ENCODE measurements at regions of chr11 and their contacts with region 1.

Region 1: GRCh38 chr11:17978553-17979287 is 34.1 kb downstream of the SERGEF start:
- DNase-seq: peak; percentile 55 to 72
- ATAC-seq: peak; percentile 98
- H3K4me3 ChIP-seq: no peak overlapping the region
- H3K27ac ChIP-seq: no peak overlapping the region
- H3K4me1 ChIP-seq: no peaks in the 10 kb centered on the region
- CTCF ChIP-seq: peak; percentile 76
- EP300 ChIP-seq: no peak
- POLR2A ChIP-seq: no peak
- RAD21 ChIP-seq: peak; percentile 67

Region 2: GRCh38 chr11:17593466-17594245 is 385.1 kb before region 1 on chr11:
- CTCF ChIA-PET with region 1: interaction called, 45 read pairs
- POLR2A ChIA-PET with region 1: no interaction called
- DNase-seq: no peak
- ATAC-seq: peak in 1 of 2 experiments; percentile 62; a peak in 3 of 6 replicates
- H3K4me3 ChIP-seq: no peak overlapping the region
- H3K27ac ChIP-seq: no peak overlapping the region
- H3K4me1 ChIP-seq: no peaks in the 10 kb centered on the region
- CTCF ChIP-seq: no peak
- EP300 ChIP-seq: no peak
- POLR2A ChIP-seq: no peak
- RAD21 ChIP-seq: no peak

Region 3: DNA sequence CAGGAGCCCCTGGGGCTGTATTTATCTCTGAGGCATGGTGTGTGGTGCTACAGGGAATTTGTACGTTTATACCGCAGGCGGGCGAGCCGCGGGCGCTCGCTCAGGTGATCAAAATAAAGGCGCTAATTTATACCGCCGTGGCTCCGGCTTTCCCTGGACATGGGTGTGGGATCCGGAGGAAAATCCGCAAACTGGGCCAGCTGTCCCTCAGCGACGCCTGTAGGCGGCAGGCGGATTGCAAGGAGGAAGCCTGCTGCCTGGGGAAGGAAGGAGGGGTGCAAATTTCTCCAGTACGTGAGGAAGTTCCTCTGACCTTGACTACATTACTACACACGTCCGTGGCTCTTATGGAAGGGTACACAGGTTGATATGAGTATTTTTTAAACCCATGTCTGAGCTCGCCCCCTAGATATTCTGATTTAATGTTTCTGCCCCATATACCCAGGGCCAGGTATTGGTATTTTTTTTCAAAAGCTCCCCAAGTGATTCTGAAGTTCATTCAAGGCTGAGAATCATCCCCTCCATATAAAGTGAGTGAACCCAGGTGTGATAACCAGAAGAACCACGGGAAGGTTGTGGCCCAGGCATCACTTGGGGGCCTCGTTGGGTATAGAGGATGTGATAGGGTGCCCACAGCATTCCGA is 256.6 kb before region 1 on chr11:
- CTCF ChIA-PET with region 1: interaction called, 15 read pairs
- POLR2A ChIA-PET with region 1: no interaction called
- DNase-seq: peak; percentile 48 to 56
- ATAC-seq: peak; percentile 12 to 70; a peak in 4 of 6 replicates
- H3K4me3 ChIP-seq: no peak overlapping the region
- H3K27ac ChIP-seq: no peak overlapping the region
- H3K4me1 ChIP-seq: peaks cover 15% of the 10 kb centered on the region; the same call in 2 of the 3 replicates
- CTCF ChIP-seq: peak; percentile 39; the same call in 2 of the 3 replicates
- EP300 ChIP-seq: no peak
- POLR2A ChIP-seq: no peak
- RAD21 ChIP-seq: peak in 1 of 2 experiments; percentile 48; a peak in 2 of 5 replicates

Region 4: GRCh38 chr11:17738151-17738973 is 240.4 kb before region 1 on chr11:
- CTCF ChIA-PET with region 1: interaction called, 403 read pairs
- POLR2A ChIA-PET with region 1: no interaction called
- DNase-seq: no peak
- ATAC-seq: no peak
- H3K4me3 ChIP-seq: no peak overlapping the region
- H3K27ac ChIP-seq: no peak overlapping the region
- H3K4me1 ChIP-seq: no peaks in the 10 kb centered on the region; the same call in 2 of the 3 replicates
- CTCF ChIP-seq: no peak
- EP300 ChIP-seq: no peak
- POLR2A ChIP-seq: no peak
- RAD21 ChIP-seq: no peak

Region 5: DNA sequence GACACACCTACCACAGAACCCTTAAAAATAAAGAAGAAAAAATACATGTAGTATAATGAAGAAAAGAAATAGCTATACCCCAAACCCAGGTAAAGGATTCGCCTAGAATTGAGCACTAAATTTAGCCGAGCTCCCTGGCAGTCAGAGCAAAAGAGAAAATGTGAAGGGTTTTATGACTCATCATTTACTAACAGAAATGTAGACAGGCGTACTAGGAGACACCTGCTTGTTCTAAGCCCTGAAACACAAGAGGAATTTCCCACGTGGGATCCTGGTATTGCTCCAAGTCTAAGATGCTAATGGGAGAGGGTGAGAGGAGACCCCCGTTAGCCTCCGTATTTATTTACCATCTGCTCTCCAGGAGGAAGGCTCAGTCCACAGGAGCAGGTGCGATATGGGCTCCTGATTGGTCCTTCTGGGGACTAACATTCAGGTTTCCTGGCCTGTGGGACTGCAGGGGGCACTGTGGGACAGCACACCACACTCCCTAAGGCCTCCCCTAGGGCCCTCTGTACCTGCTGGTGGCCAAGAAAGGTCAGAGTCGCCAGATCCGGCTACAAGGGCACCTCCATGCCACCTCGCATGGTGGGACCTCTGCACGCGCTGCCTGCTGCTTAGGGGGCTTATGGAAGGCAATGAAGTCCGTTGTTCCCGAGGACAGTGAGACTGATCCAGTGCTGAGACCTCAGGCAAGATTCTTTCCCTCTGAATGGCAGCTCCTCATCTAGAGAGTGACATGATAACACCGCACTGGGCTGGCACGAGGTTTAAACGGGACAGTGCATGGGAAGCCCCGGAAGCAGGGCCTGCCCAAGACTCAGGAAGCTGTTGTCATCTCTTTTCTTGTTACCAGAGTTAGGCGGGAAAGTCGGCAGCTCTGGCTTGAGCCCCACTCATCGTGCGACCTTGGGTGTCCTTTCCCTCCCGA is 218.4 kb before region 1 on chr11:
- CTCF ChIA-PET with region 1: interaction called, 41 read pairs
- POLR2A ChIA-PET with region 1: no interaction called
- DNase-seq: peak; percentile 57
- ATAC-seq: peak; percentile 75 to 96; a peak in 5 of 6 replicates
- H3K4me3 ChIP-seq: no peak overlapping the region
- H3K27ac ChIP-seq: no peak overlapping the region
- H3K4me1 ChIP-seq: no peaks in the 10 kb centered on the region
- CTCF ChIP-seq: peak; percentile 39
- EP300 ChIP-seq: no peak
- POLR2A ChIP-seq: no peak
- RAD21 ChIP-seq: peak; percentile 58 to 74

Region 6: GRCh38 chr11:17950644-17951043 is 28.1 kb before region 1 on chr11:
- CTCF ChIA-PET with region 1: interaction called, 11 read pairs
- POLR2A ChIA-PET with region 1: no interaction called
- DNase-seq: no peak
- ATAC-seq: no peak
- H3K4me3 ChIP-seq: no peak overlapping the region
- H3K27ac ChIP-seq: no peak overlapping the region
- H3K4me1 ChIP-seq: peaks cover 14% of the 10 kb centered on the region
- CTCF ChIP-seq: no peak
- EP300 ChIP-seq: no peak
- POLR2A ChIP-seq: no peak
- RAD21 ChIP-seq: no peak

Region 7: DNA sequence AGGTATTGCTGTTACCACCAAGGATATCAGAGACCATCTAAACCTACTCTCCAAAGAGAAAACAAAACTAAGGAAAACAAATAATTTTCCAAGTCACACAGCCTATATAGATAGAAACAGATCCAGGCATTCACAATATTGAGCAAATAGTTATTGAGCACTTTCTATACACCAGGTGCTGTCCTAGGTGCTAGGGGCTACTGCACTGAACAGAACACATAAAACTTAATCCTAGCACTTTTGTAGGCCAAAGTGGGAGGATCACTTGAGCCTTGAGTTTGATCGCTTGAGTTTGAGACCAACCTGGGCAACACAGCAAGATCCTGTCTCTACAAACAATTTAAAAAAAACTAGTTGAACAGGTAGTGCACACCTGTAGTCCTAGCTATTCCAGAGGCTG is 10.5 kb before region 1 on chr11:
- CTCF ChIA-PET with region 1: interaction called, 69 read pairs
- POLR2A ChIA-PET with region 1: no interaction called
- DNase-seq: no peak
- ATAC-seq: no peak
- H3K4me3 ChIP-seq: no peak overlapping the region
- H3K27ac ChIP-seq: no peak overlapping the region
- H3K4me1 ChIP-seq: no peaks in the 10 kb centered on the region
- CTCF ChIP-seq: no peak
- EP300 ChIP-seq: no peak
- POLR2A ChIP-seq: no peak
- RAD21 ChIP-seq: no peak

Region 8: GRCh38 chr11:18457431-18457830 is 478.7 kb after region 1 on chr11:
- CTCF ChIA-PET with region 1: no interaction called
- POLR2A ChIA-PET with region 1: no interaction called
- DNase-seq: peak; percentile 10 to 13
- ATAC-seq: peak in 1 of 2 experiments; percentile 34; a peak in 3 of 6 replicates
- H3K4me3 ChIP-seq: no peak overlapping the region
- H3K27ac ChIP-seq: no peak overlapping the region
- H3K4me1 ChIP-seq: peaks cover 8% of the 10 kb centered on the region; the same call in 1 of the 3 replicates
- CTCF ChIP-seq: no peak
- EP300 ChIP-seq: no peak
- POLR2A ChIP-seq: no peak
- RAD21 ChIP-seq: no peak